IMR-90 (cell line): ENCODE measurements at regions of chr6 and their contacts with region 1.

Region 1: DNA sequence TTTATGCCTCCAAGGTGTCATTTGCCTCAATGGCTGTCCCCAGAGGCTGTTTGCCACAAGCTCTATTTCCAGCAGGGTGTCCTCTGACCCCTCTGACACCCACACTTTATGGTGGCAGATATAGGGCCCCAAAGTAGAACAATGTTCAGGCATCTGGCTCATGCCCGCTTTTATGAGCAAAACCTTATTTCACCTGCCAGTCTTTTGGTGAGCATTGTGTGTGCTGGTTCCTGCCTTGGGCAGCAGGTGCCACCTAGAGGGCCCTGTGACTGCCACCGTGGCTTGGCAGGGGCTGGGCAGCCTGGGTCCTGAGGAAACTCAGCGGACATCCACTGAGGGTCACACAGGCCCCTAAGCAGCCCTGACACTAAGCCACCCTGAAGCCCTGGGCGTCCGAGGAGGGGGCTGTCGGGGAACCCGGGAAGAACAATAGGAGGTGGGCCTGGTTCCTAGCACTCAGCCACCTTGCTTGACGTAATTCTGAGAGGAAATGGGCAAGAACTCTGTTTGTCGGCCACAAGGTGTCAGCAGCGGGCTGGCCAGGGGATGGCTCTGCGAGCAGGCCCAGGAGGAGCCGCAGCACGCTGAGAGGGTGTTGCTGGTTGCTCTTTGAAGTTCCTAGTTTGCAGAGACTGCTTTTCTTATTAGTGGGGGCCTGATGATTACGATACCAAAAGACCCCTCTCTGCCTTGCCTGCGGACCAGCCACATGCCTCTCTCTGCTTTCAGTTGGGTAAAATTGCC is 148.9 kb downstream of the SCML4 start:
- DNase-seq: peak; percentile 84
- ATAC-seq: peak; percentile 93
- H3K4me3 ChIP-seq: no peak overlapping the region
- H3K27ac ChIP-seq: no peak overlapping the region
- H3K4me1 ChIP-seq: peaks cover 6% of the 10 kb centered on the region; the same call in 1 of the 2 replicates
- H3K27me3 ChIP-seq: no peaks in the 10 kb centered on the region
- CTCF ChIP-seq: peak; percentile 97
- POLR2A ChIP-seq: peak; percentile 48; the same call in 1 of the 2 replicates
- RAD21 ChIP-seq: peak; percentile 99

Region 2: GRCh38 chr6:107699254-107699653 is 24.1 kb after region 1 on chr6:
- CTCF ChIA-PET with region 1: interaction called, 3 read pairs
- POLR2A ChIA-PET with region 1: no interaction called
- dilution Hi-C with region 1: no loop called
- in situ Hi-C with region 1: no loop called
- intact Hi-C with region 1: loop called (anchors 1 kb)
- DNase-seq: no peak
- ATAC-seq: no peak
- H3K4me3 ChIP-seq: no peak overlapping the region
- H3K27ac ChIP-seq: no peak overlapping the region
- H3K4me1 ChIP-seq: peaks cover 10% of the 10 kb centered on the region
- H3K27me3 ChIP-seq: no peaks in the 10 kb centered on the region
- CTCF ChIP-seq: no peak
- POLR2A ChIP-seq: no peak
- RAD21 ChIP-seq: no peak

Region 3: DNA sequence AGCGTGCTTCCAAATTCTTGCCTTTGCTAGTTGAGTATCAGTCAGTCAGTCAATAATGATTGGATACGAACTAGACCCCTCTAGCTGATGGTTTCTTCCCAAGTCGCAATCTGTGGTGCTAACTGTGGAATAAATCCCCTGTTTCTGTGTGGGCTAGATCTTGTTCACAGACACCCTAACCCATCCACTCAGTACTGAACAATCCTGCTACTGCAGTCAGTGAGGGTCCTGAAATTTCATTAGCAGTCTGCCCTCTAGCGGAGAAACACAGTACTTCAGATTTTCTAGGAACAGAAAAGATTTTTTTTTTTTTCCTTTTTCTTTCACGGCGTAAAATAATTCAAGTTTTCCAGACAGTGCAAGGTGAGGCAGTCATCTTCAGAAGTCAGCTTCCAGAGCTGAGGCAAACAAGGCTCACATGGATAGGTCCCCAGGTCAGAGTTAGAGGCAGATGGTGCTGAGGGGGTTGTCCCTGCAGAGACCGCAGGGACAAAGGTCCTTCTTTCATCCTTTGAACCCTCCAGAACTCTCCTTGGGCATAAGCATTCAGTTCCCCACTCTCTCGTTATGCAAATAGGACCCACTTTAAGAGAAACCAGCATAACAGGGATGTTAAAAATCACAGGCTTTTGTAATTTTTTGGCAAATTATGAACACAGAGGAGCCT is 29.3 kb after region 1 on chr6:
- CTCF ChIA-PET with region 1: interaction called, 4 read pairs
- POLR2A ChIA-PET with region 1: no interaction called
- dilution Hi-C with region 1: no loop called
- in situ Hi-C with region 1: loop called (anchors 5 kb)
- intact Hi-C with region 1: loop called (anchors 1 kb)
- DNase-seq: peak; percentile 68
- ATAC-seq: peak; percentile 89
- H3K4me3 ChIP-seq: no peak overlapping the region
- H3K27ac ChIP-seq: no peak overlapping the region
- H3K4me1 ChIP-seq: no peaks in the 10 kb centered on the region
- H3K27me3 ChIP-seq: 0 out of 2 replicates have a peak, but pooled peaks cover 4% of the 10 kb centered on the region
- CTCF ChIP-seq: peak; percentile 82
- POLR2A ChIP-seq: no peak
- RAD21 ChIP-seq: peak; percentile 78

Region 4: DNA sequence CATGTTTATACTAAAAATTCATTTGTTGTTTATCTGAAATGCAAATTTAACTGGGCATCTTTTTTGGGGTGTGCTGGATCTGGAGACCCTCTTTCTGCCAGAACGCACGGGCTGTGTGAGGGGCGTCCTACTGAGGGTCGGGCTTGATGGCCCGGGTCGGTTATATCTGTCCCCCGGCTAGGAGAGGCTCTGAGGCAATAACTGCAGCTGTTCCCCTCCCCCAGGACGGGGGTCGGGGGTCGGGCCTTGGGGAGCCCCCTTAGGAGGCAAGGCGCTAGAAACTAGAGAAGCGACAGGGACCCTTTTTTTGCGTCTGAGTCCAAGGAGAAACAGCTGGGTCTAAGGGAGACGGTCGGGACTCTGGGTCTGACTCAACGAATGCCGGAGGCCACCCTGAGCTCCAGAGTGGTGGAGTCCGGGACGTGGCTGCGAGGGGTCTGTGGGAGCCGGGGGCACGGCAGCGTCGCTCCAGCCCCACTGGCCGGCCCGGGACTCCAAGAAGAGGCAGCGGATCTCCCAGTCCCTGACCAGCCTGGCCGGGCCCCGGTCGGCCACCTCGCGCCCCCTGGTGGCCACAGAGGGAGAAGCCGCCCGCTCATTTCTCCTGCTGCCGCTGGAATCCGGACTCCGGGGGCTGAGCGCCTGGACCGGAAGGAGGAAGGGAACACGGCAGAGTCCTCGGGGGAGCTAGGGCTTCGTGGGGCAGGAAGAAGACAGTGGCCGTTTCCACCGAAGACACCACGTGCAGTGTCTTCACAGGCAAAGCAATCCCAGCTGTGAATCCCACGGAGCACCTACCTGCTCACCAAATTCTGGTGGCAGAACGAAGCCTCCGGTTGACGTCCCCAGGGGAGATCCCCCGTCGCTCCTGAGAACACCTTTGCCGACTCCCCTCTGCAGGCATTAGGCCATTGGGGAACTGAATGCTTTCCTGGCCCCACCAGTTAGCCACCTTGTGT is 173.0 kb after region 1 on chr6:
- CTCF ChIA-PET with region 1: interaction called, 6 read pairs
- POLR2A ChIA-PET with region 1: no interaction called
- dilution Hi-C with region 1: no loop called
- in situ Hi-C with region 1: loop called (anchors 5 kb)
- intact Hi-C with region 1: loop called (anchors 1 kb)
- DNase-seq: peak; percentile 63
- ATAC-seq: peak; percentile 100
- H3K4me3 ChIP-seq: peak overlapping the region; percentile 47
- H3K27ac ChIP-seq: no peak overlapping the region
- H3K4me1 ChIP-seq: no peaks in the 10 kb centered on the region
- H3K27me3 ChIP-seq: peaks cover 7% of the 10 kb centered on the region
- CTCF ChIP-seq: peak; percentile 93
- POLR2A ChIP-seq: no peak
- RAD21 ChIP-seq: peak; percentile 79

Region 5: DNA sequence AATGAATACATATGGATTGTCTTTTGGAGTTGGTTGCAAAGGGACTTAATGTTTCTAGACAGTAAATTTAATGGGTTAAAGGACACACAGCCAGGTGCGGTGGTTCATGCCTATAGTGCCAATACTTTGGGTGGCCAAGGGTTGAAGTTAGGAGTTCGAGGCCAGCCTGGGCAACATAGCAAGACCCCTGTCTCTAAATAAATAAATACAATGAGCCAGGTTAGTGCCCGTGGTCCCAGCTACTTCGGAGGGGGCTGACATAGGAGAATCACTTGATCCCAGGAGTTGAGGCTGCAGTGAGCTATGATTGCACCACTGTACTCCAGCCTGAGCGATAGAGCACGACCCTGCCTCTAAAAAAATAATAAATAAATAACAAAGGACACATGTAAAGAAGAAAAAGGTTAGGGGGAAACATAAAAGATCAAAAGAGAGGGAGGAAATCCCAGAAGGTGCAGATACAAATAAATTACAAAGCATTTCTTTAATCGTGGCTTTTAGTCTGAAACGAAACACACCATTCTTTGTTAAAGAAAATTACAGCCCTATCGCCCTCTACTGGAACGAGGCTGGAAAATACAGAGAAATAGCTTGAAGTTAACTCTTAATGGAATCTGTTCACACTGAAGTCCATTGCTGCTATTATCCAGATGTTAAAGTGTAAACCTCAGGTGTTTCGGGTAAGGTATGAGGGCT is 191.6 kb after region 1 on chr6:
- CTCF ChIA-PET with region 1: no interaction called
- POLR2A ChIA-PET with region 1: no interaction called
- dilution Hi-C with region 1: no loop called
- in situ Hi-C with region 1: no loop called
- intact Hi-C with region 1: loop called (anchors 5 kb)
- DNase-seq: peak; percentile 34
- ATAC-seq: peak; percentile 63
- H3K4me3 ChIP-seq: no peak overlapping the region
- H3K27ac ChIP-seq: no peak overlapping the region
- H3K4me1 ChIP-seq: peaks cover 3% of the 10 kb centered on the region; the same call in 1 of the 2 replicates
- H3K27me3 ChIP-seq: no peaks in the 10 kb centered on the region
- CTCF ChIP-seq: peak; percentile 50
- POLR2A ChIP-seq: no peak
- RAD21 ChIP-seq: peak; percentile 25

Region 6: DNA sequence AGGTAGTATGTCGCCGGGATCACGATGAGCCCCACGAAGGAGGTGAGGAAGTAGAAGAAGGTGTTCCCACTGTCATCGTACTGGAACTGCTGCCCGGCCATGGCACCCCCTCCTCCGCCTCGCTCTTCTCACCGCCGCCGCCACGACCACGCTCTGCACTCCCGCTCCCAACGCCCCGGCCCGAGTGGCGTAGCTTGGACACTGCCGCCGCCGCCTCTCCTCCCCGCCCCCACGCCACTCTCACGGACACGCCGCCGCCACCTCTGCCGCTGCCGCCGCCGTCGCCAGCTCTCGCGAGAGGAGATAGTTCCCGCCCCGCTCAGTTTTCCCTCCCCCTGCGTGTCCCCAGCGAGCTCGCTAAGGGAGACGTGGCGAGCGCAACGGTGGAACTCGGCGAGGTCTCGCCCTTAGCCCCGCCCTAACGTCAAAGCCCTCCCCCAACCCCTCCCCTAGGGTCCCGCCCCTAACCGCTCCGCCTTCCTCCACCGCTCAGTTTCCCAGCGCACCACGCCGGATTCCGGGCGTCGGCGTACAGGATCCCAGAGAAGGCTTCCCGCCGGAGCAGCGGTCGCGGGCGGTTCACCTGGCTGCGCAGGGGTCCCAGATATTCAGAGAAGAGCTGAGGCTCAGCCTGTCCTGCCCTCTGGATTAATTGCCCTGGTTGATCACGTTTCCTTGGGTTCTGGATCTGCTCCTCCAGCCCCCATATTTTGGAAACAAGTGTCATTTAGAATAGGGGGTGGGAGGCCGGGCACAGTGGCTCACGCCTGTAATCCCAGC is 282.9 kb after region 1 on chr6 and contains the start of gene SEC63:
- CTCF ChIA-PET with region 1: no interaction called
- POLR2A ChIA-PET with region 1: no interaction called
- dilution Hi-C with region 1: no loop called
- in situ Hi-C with region 1: no loop called
- intact Hi-C with region 1: loop called (anchors 10 kb)
- DNase-seq: peak; percentile 96
- ATAC-seq: peak; percentile 97
- H3K4me3 ChIP-seq: peak within 1 kb of the TSS; percentile 90
- H3K27ac ChIP-seq: peak within 1 kb of the TSS; percentile 95
- H3K4me1 ChIP-seq: peaks cover 2% of the 10 kb centered on the region; the same call in 1 of the 2 replicates
- H3K27me3 ChIP-seq: no peaks in the 10 kb centered on the region
- CTCF ChIP-seq: no peak
- POLR2A ChIP-seq: peak; percentile 91
- RAD21 ChIP-seq: no peak
- total RNA-seq, gene SEC63: 8.6 and 18.3 TPM in 2 replicates

Region 7: DNA sequence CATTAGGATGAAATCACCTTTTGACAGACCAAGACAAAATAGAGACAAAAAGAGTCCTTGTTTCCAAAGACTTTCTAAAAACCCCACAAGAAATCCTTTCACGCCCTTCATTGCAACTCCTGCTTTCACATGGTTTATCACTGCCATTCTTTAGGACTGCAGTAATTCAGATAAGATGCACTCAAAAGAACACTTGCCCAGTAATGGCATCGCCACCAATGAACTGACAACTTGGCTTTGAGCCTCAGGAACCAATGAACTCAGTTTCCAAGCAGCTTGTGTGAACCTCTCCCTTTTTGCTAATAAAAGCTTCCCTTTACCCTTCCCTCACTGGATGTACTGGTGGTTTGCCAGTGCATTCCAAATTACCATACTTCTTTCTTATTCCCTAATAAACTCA is 377.5 kb after region 1 on chr6:
- CTCF ChIA-PET with region 1: no interaction called
- POLR2A ChIA-PET with region 1: no interaction called
- dilution Hi-C with region 1: no loop called
- in situ Hi-C with region 1: no loop called
- intact Hi-C with region 1: loop called (anchors 2 kb)
- DNase-seq: no peak
- ATAC-seq: no peak
- H3K4me3 ChIP-seq: no peak overlapping the region
- H3K27ac ChIP-seq: no peak overlapping the region
- H3K4me1 ChIP-seq: no peaks in the 10 kb centered on the region
- H3K27me3 ChIP-seq: no peaks in the 10 kb centered on the region
- CTCF ChIP-seq: no peak
- POLR2A ChIP-seq: no peak
- RAD21 ChIP-seq: no peak